PC-9 (cell line): ENCODE measurements at regions of chr10 and their contacts with region 1.

Region 1: DNA sequence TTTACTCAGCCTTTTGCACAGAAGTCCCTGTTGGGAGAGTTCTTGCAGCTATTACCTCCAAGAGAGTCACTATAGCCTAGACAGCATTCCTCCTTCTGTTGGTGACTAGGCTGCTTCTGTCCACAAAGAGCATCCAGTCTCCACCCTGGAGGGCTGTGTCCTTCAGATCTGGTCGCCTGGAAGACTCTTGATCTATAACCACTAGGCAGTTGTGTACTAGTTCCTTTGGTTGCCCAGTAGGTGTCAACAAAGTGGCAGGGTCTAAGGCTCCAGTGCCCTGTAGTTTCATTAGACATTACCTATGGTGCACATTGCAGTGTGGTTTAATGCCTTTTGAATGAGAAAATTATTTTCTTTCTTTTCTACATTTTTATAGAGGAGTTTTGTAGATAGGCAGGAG is 11.3 kb upstream of the AKR1C2 start:
- DNase-seq: peak in 1 of 2 experiments; percentile 38
- H3K4me3 ChIP-seq: peak overlapping the region; percentile 49
- H3K27ac ChIP-seq: peak overlapping the region; percentile 100
- H3K4me1 ChIP-seq: peaks cover 75% of the 10 kb centered on the region
- H3K27me3 ChIP-seq: no peaks in the 10 kb centered on the region
- CTCF ChIP-seq: peak; percentile 21; the same call in 1 of the 2 replicates

Region 2: GRCh38 chr10:4941540-4942330 is 73.2 kb before region 1 on chr10:
- CTCF ChIA-PET with region 1: no interaction called
- POLR2A ChIA-PET with region 1: interaction called, 15 read pairs
- intact Hi-C with region 1: no loop called
- DNase-seq: peak; percentile 81 to 85
- H3K4me3 ChIP-seq: no peak overlapping the region
- H3K27ac ChIP-seq: peak overlapping the region; percentile 100
- H3K4me1 ChIP-seq: peaks cover 77% of the 10 kb centered on the region
- H3K27me3 ChIP-seq: no peaks in the 10 kb centered on the region
- CTCF ChIP-seq: no peak

Region 3: DNA sequence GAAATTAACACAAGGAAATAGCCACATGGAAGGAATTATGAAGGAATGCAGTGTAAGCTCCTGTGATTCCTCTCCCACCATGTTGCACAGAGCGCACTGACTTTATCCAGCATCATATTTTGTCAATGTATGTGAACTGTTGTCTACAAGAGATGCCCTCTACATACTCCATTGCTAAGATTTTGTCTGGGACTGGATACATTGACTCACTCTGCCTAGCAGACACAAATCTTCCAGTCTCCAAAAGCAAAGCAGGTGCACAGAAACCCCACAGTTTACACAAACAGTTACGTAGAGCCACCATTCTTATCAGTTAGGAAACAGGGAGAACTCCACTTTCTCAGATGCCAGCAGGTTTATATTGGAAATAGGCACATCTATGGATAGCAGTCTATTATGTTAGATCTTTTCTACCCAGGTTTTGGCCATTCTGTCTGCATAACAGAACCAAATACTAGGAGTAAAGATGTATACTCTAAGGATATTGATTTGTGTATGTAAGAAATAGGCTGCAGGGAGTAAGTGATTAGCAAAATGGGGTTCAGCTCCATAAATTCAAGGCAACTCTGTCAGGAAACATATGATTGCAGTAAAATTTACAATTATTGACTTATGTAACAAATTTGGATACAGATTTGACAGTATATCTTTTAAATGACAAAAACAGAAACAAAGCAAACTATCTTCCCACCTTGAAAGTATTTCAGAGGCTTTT is 12.8 kb before region 1 on chr10:
- CTCF ChIA-PET with region 1: no interaction called
- POLR2A ChIA-PET with region 1: no interaction called
- intact Hi-C with region 1: no loop called
- DNase-seq: no peak
- H3K4me3 ChIP-seq: peak overlapping the region; percentile 83
- H3K27ac ChIP-seq: peak overlapping the region; percentile 92
- H3K4me1 ChIP-seq: 0 out of 2 replicates have a peak, but pooled peaks cover 3% of the 10 kb centered on the region
- H3K27me3 ChIP-seq: no peaks in the 10 kb centered on the region
- CTCF ChIP-seq: no peak

Region 4: GRCh38 chr10:5071411-5072198 is 56.7 kb after region 1 on chr10:
- CTCF ChIA-PET with region 1: no interaction called
- POLR2A ChIA-PET with region 1: no interaction called
- intact Hi-C with region 1: loop called (anchors 2 kb)
- DNase-seq: peak; percentile 74 to 85
- H3K4me3 ChIP-seq: peak overlapping the region; percentile 38; the same call in 1 of the 2 replicates
- H3K27ac ChIP-seq: peak overlapping the region; percentile 99
- H3K4me1 ChIP-seq: peaks cover 50% of the 10 kb centered on the region
- H3K27me3 ChIP-seq: no peaks in the 10 kb centered on the region
- CTCF ChIP-seq: no peak

Region 5: DNA sequence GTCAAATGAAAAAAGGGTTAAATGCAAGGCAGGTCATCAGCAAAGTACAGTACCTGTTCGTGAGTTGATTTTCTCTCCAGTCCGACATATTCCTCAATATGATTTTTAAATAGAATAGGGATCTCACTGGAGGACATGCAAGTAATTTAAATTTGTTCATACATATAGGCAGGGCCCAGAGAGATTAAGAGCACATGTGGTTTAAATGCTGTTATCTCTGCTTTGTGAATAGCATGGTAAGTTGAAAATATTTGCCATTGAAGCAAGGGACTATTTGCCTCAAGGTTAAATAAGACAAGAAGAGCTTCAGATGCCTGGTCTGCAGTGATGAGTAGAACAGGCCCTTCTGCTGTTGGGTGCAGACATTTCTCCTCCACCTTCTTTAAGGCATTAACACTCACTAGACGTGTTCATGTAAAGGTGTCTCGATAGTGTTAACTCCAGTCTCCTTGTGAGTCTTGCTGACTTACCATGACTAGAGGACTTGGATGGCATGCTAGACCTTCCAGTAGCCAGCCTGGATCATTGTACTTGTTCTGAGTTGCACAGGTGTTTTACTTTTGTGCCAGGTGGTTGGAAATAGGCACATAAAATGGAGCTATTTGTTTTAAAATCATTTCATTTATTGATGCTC is 63.7 kb after region 1 on chr10:
- CTCF ChIA-PET with region 1: no interaction called
- POLR2A ChIA-PET with region 1: no interaction called
- intact Hi-C with region 1: loop called (anchors 1 kb)
- DNase-seq: peak; percentile 66 to 88
- H3K4me3 ChIP-seq: peak overlapping the region; percentile 29; the same call in 1 of the 2 replicates
- H3K27ac ChIP-seq: peak overlapping the region; percentile 99
- H3K4me1 ChIP-seq: peaks cover 60% of the 10 kb centered on the region
- H3K27me3 ChIP-seq: no peaks in the 10 kb centered on the region
- CTCF ChIP-seq: no peak

Region 6: GRCh38 chr10:5094265-5095205 is 79.6 kb after region 1 on chr10 and contains the start of gene AKR1C3:
- CTCF ChIA-PET with region 1: interaction called, 4 read pairs
- POLR2A ChIA-PET with region 1: interaction called, 7 read pairs
- intact Hi-C with region 1: loop called (anchors 1 kb)
- DNase-seq: peak; percentile 37 to 74
- H3K4me3 ChIP-seq: peak within 1 kb of the TSS; percentile 97
- H3K27ac ChIP-seq: peak within 1 kb of the TSS; percentile 99
- H3K4me1 ChIP-seq: peaks cover 34% of the 10 kb centered on the region
- H3K27me3 ChIP-seq: no peaks in the 10 kb centered on the region; the same call in 1 of the 2 replicates
- CTCF ChIP-seq: peak; percentile 81
- total RNA-seq, gene AKR1C3: 1,870 and 1,886 TPM in 2 replicates

Region 7: DNA sequence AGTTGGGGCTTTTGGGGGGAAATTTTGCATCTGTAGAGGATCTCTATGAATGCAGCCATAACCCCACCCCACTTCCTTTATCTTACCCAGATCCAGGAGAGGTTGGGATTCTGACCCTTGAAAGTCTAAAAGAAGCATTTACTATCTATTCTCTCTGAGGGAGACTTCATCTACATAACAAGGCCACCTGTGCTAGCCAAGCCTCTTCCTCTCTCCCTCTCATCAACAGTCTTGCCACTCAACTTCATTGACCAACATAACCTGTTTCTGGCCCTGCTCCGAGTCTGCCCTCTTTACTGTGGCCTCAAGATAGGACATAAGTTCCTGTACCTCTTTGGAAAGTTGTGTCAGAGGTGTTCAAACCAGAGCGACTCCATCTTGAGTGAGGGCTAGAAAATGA is 370.3 kb after region 1 on chr10:
- CTCF ChIA-PET with region 1: no interaction called
- POLR2A ChIA-PET with region 1: no interaction called
- intact Hi-C with region 1: loop called (anchors 10 kb)
- DNase-seq: no peak
- H3K4me3 ChIP-seq: no peak overlapping the region
- H3K27ac ChIP-seq: no peak overlapping the region
- H3K4me1 ChIP-seq: no peaks in the 10 kb centered on the region
- H3K27me3 ChIP-seq: no peaks in the 10 kb centered on the region
- CTCF ChIP-seq: no peak

Region 8: GRCh38 chr10:5434017-5434753 is 419.2 kb after region 1 on chr10:
- CTCF ChIA-PET with region 1: no interaction called
- POLR2A ChIA-PET with region 1: interaction called, 6 read pairs
- intact Hi-C with region 1: loop called (anchors 10 kb)
- DNase-seq: peak in 1 of 2 experiments; percentile 14
- H3K4me3 ChIP-seq: no peak overlapping the region
- H3K27ac ChIP-seq: peak overlapping the region; percentile 43
- H3K4me1 ChIP-seq: peaks cover 10% of the 10 kb centered on the region; the same call in 1 of the 2 replicates
- H3K27me3 ChIP-seq: no peaks in the 10 kb centered on the region
- CTCF ChIP-seq: peak; percentile 76